ENCODE measurements at regions of chr3 and their contacts with region 1.

Region 1: DNA sequence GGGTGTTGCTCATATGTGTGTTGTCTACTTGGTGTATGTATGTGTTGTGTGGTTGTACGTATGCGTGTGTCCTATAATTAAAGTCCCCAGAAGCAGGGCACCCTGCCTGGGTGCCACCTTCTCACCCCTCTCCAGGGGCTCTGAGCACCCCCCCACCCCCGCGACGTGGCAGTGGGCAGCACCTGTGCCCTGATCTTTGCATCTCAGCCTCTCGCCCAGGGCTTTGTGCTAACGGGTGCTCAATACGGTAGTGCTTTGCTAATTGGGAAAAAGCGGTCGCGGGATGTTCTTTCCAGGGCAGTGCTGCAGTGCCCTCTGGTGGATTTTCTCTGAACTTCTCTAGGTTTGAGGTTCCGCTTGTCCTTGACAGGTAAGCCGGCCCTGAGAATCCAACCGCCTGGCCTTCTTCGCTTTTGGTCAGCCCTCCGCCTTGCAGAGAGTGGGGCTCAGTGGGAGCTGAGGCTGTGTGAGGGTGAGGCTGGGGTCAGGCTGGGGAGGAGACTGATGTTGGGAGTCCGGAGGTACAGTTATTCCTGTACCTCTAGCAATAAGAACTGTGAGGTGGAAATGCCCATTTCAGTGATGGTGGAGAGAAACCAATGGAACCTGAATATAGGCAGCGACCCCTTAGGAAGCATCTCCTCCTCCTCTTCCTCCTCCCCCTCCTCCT is 17.6 kb upstream of the EPHB3 start:
- DNase-seq: peak; percentile 83 to 89
- H3K4me3 ChIP-seq: no peak overlapping the region
- H3K27ac ChIP-seq: no peak overlapping the region
- H3K4me1 ChIP-seq: no peaks in the 10 kb centered on the region
- H3K27me3 ChIP-seq: peaks cover 50% of the 10 kb centered on the region
- CTCF ChIP-seq: peak; percentile 97

Region 2: DNA sequence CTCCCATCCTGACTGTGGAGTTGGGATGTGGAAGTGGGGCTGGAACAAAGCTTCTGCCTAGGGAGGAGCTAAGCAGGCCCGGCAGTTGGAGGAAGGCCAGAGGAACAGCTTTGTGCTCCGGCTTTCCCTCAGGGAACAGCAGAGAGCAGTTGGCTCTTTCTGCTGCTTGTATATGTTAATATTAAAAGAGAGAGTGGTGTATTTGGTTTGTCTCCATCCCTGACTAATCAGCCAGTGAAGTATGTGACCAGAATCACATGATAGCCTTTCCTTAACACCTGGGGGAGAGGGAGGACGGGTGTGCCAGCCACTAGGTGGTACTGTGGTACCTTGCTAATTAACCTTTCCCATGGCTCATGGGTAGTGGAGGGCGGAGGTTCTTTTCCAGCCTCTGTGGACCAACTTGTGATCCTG is 398.9 kb before region 1 on chr3:
- CTCF ChIA-PET with region 1: no interaction called
- POLR2A ChIA-PET with region 1: no interaction called
- intact Hi-C with region 1: loop called (anchors 10 kb)
- DNase-seq: peak; percentile 71 to 74
- H3K4me3 ChIP-seq: no peak overlapping the region
- H3K27ac ChIP-seq: no peak overlapping the region
- H3K4me1 ChIP-seq: no peaks in the 10 kb centered on the region
- H3K27me3 ChIP-seq: no peaks in the 10 kb centered on the region
- CTCF ChIP-seq: peak; percentile 79

Region 3: GRCh38 chr3:184298759-184299496 is 245.1 kb before region 1 on chr3 and contains the start of gene PSMD2:
- CTCF ChIA-PET with region 1: no interaction called
- POLR2A ChIA-PET with region 1: no interaction called
- intact Hi-C with region 1: loop called (anchors 2 kb)
- DNase-seq: peak; percentile 92 to 99
- H3K4me3 ChIP-seq: peak within 1 kb of the TSS; percentile 100
- H3K27ac ChIP-seq: peak within 1 kb of the TSS; percentile 57
- H3K4me1 ChIP-seq: peaks cover 15% of the 10 kb centered on the region
- H3K27me3 ChIP-seq: no peaks in the 10 kb centered on the region
- CTCF ChIP-seq: no peak
- total RNA-seq, gene PSMD2: 521 and 788 TPM in 2 replicates

Region 4: DNA sequence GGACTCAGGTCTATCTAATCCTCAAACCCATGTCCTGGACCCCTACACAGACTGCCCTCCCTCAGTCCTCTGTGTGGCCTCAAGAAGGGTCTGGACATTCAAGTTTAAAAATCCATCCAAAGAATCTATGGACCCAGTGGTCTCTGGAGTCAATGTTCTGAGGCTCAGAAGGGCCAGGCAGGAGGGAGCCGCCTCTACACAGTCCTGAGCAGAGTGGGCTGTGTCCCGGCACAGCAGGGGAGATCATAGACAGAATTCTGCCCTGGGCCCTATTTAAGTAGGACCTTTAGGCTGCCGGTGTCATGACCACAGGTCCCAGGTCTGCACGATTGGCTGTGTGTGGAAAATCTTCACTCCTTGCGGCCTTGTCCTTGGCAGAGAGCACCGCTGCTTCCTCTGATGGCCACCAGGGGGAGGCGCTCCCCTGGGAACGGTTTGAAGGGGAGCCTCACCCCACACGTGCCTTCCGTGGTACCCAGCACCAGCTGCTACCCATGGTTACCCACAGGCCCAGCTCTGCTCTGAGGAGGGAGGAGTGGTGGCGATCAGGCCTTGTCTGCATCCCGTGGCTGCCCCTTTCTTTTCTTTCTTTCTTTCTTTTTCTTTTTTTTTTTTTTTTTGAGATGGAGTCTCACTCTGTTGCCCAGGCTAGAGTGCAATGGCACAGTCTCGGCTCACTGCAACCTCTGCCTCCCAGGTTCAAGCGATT is 126.2 kb before region 1 on chr3:
- CTCF ChIA-PET with region 1: interaction called, 8 read pairs
- POLR2A ChIA-PET with region 1: no interaction called
- intact Hi-C with region 1: loop called (anchors 1 kb)
- DNase-seq: peak; percentile 57 to 75
- H3K4me3 ChIP-seq: no peak overlapping the region
- H3K27ac ChIP-seq: no peak overlapping the region
- H3K4me1 ChIP-seq: no peaks in the 10 kb centered on the region
- H3K27me3 ChIP-seq: peaks cover 11% of the 10 kb centered on the region; the same call in 1 of the 2 replicates
- CTCF ChIP-seq: peak; percentile 98

Region 5: GRCh38 chr3:184513276-184514170 is 30.5 kb before region 1 on chr3:
- CTCF ChIA-PET with region 1: interaction called, 10 read pairs
- POLR2A ChIA-PET with region 1: no interaction called
- intact Hi-C with region 1: loop called (anchors 2 kb)
- DNase-seq: peak; percentile 56 to 85
- H3K4me3 ChIP-seq: no peak overlapping the region
- H3K27ac ChIP-seq: no peak overlapping the region
- H3K4me1 ChIP-seq: no peaks in the 10 kb centered on the region
- H3K27me3 ChIP-seq: peaks cover 93% of the 10 kb centered on the region
- CTCF ChIP-seq: peak; percentile 94

Region 6: GRCh38 chr3:184748219-184749135 is 204.5 kb after region 1 on chr3:
- CTCF ChIA-PET with region 1: no interaction called
- POLR2A ChIA-PET with region 1: no interaction called
- intact Hi-C with region 1: no loop called
- DNase-seq: peak; percentile 41 to 55
- H3K4me3 ChIP-seq: no peak overlapping the region
- H3K27ac ChIP-seq: no peak overlapping the region
- H3K4me1 ChIP-seq: peaks cover 7% of the 10 kb centered on the region
- H3K27me3 ChIP-seq: no peaks in the 10 kb centered on the region
- CTCF ChIP-seq: peak; percentile 73

Region 7: DNA sequence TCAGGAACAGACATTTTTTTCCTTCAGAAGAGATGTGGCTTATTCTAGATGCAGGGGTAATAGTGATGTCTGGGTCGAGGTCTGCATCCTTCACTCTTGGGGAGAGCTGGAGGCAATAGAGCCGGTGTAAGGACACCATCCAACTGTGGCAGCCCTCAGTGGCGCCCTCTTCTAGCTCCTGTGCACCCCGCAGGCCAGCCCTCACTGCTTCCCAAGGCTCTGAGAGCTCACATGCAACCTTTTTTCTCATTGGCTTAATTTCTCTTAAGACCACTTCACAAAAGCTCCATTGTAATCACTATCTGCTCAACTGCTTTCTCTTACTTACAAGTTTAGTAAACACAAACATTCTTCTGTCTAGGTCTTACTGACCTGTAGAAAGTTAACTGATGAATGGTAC is 264.0 kb after region 1 on chr3:
- CTCF ChIA-PET with region 1: no interaction called
- POLR2A ChIA-PET with region 1: no interaction called
- intact Hi-C with region 1: loop called (anchors 1 kb)
- DNase-seq: no peak
- H3K4me3 ChIP-seq: no peak overlapping the region
- H3K27ac ChIP-seq: no peak overlapping the region
- H3K4me1 ChIP-seq: peaks cover 16% of the 10 kb centered on the region
- H3K27me3 ChIP-seq: no peaks in the 10 kb centered on the region
- CTCF ChIP-seq: 0 out of 2 replicates have a peak, but pooled peaks have one; percentile 23